GM10248 (cell line): ENCODE measurements at regions of chr6 and their contacts with region 1.

Region 1: DNA sequence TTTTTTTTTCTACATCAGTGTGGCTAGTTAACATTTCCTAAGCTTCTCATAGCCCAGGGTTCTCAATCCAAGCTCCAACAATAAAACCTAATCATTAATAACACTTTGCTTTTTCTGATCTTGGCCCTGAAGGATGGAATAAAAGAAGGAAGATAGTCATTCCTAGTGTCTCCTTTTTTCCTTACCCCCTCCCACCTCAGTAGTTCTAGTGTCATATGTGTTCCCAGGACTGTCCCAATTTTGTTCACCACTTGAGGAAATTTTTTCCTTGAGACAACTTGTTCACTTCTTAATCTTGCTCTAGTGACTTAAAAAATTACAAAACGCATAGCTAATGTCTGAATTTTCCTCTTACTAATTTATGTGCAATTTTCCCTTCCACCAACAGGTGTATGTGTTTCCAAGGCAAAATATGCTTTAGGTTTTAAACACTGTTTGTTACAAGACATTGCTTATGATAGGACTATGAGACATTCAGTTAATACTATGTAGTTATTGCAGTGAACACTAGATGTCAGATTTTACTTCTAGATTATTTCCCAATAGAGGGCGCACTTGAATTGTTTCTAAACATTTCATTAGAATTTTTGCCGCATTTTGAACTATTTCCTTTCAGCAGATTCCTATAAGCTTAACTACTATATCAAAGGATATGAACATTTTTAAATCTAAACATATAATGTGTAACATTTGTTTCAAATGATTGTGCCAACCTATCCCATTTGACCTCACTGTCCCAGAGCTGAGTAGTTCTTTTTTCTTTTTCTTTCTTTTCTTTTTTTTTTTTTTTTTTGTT is 18.5 kb upstream of the C6orf141 start:
- DNase-seq: peak; percentile 42
- CTCF ChIP-seq: peak; percentile 75

Region 2: DNA sequence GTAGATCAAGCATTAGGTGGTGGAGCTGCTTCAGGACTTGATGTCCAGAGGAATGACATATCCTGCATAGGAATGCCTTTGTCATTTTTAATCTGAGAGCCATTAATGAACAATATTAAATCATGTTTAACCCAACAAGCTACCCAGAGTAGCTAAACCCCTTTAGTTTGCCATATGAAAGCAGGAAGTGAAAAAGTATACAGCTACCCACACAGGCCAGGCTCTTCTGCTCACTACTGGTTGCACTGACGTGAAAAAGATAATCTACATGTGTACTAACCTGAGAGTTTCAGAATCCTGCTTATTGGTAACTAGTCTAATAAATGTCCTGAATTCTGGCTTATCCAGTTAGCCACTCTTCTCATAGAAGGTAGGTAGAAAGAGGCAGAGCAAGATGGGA is 12.3 kb before region 1 on chr6:
- CTCF ChIA-PET with region 1: interaction called, 12 read pairs
- POLR2A ChIA-PET with region 1: no interaction called
- DNase-seq: no peak
- CTCF ChIP-seq: no peak

Region 3: GRCh38 chr6:49550492-49551077 is 18.6 kb after region 1 on chr6 and contains the start of gene C6orf141:
- CTCF ChIA-PET with region 1: interaction called, 25 read pairs
- POLR2A ChIA-PET with region 1: no interaction called
- DNase-seq: peak; percentile 66
- CTCF ChIP-seq: no peak

Region 4: GRCh38 chr6:49606696-49607390 is 74.9 kb after region 1 on chr6:
- CTCF ChIA-PET with region 1: interaction called, 73 read pairs
- POLR2A ChIA-PET with region 1: no interaction called
- DNase-seq: peak; percentile 60
- CTCF ChIP-seq: peak; percentile 83

Region 5: DNA sequence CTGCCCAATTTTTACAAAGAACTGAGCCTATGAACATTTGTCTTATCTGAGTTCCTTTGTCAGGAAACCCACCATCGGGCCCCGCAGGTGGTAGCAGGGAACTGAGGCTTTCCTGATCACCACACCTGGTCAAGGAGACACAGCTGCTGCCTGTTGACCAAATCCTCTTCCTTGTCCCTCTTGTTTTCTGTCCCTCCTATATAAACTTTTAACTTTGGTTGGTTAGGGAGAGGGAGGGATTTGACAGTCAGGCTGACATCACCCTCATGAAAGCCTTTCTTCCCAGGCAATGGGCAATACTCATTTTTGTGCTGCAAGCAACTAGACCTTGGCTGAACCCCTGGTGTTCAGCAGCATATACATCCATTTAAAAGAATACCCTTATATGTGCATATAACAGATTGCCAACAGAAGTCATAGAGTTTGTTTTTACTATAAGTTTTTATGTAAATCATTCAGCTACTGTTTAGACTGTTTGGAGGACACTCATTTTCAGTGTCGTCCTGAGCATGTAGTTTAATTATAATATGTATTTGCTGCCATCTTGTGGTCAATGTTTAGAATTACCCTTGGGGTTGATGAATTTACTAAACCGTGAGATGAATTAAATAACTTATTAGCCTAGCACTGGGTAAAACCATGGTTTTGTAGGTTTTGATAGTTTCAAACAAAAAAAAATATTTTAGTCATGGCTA is 317.4 kb after region 1 on chr6:
- CTCF ChIA-PET with region 1: interaction called, 26 read pairs
- POLR2A ChIA-PET with region 1: no interaction called
- DNase-seq: peak; percentile 36
- CTCF ChIP-seq: peak; percentile 59